CD4-positive, alpha-beta T cell (primary cell): ENCODE measurements at regions of chr5 and their contacts with region 1.

Region 1: DNA sequence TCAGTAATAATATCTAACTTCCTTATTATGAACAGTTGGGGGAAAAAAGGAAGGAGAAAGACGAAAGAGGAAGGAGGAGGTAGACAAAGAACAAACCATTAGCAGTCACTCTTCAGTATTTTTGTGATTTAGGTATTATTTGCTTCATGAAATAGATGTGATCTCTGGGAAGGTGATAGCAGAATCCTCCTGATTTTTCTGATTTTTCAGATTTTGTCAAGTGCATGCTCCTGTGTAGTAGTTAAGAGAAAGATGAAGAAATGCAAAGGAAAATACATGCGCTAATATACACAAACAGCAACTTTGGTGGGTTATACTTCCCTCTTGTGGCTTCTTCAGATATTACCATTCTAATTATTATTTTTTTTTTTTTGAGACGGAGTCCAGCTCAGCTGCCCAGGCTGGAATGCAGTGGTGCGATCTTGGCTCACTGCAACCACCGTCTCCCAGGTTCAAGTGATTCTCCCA is 31.6 kb downstream of the LMNB1 start:
- DNase-seq: peak in 3 of 14 experiments; percentile 42 to 52 (median 47)
- ATAC-seq: no peak
- H3K4me3 ChIP-seq: no peak overlapping the region
- H3K4me3 Mint-ChIP-seq: no peak overlapping the region
- H3K27ac ChIP-seq: no peak overlapping the region
- H3K27ac Mint-ChIP-seq: no peak overlapping the region
- H3K4me1 ChIP-seq: peaks cover 12% of the 10 kb centered on the region
- H3K4me1 Mint-ChIP-seq: peaks cover 32% of the 10 kb centered on the region
- H3K27me3 ChIP-seq: no peaks in the 10 kb centered on the region
- H3K27me3 Mint-ChIP-seq: no peaks in the 10 kb centered on the region
- CTCF ChIP-seq: peak; percentile 59

Region 2: GRCh38 chr5:126544087-126544740 is 264.3 kb before region 1 on chr5:
- CTCF ChIA-PET with region 1: interaction called, 3 read pairs
- POLR2A ChIA-PET with region 1: no interaction called
- intact Hi-C with region 1: loop called in 1 of 2 experiments (anchors 10 kb)
- DNase-seq: peak in 10 of 14 experiments; percentile 3 to 46 (median 20)
- ATAC-seq: peak; percentile 49
- H3K4me3 ChIP-seq: no peak overlapping the region
- H3K4me3 Mint-ChIP-seq: no peak overlapping the region
- H3K27ac ChIP-seq: no peak overlapping the region
- H3K27ac Mint-ChIP-seq: no peak overlapping the region
- H3K4me1 ChIP-seq: no peaks in the 10 kb centered on the region
- H3K4me1 Mint-ChIP-seq: peaks cover 2% of the 10 kb centered on the region
- H3K27me3 ChIP-seq: no peaks in the 10 kb centered on the region
- H3K27me3 Mint-ChIP-seq: no peaks in the 10 kb centered on the region
- CTCF ChIP-seq: no peak